Sciatic nerve (tissue), 2 donors: ENCODE measurements at regions of chrX and their contacts with region 1.

Region 1: GRCh38 chrX:13780868-13781427 is 35.9 kb downstream of the GPM6B start:
- DNase-seq: no peak
- ATAC-seq: no peak

Region 2: DNA sequence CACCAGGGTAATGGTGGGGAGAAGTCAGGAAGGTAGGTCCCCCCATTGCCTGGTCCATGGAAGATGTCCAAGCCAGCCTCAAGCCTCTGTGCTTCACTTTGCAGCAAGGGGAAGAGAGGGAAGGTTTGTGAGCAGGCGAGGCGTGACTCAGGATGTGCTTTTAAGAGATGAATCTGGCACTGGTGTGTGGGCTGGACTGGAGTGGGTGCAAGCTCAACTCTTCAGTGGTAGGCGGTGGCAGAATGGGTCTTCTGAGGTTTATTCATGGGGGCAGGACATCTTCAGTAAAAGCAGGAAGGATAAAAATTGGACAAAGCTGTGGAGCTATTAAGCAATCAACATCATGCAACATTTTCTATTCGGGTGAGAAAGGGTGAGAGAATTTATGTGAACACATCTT is 16.6 kb after region 1 on chrX:
- intact Hi-C with region 1: loop called (anchors 2 kb)
- DNase-seq: no peak
- ATAC-seq: no peak